GM12878 (cell line): ENCODE measurements at regions of chr11 and their contacts with region 1.

Region 1: GRCh38 chr11:102341844-102342318 is 5.1 kb upstream of the BIRC2 start:
- DNase-seq: peak; percentile 76
- ATAC-seq: peak; percentile 67
- H3K4me3 ChIP-seq: no peak overlapping the region
- H3K27ac ChIP-seq: no peak overlapping the region
- H3K4me1 ChIP-seq: no peaks in the 10 kb centered on the region
- H3K27me3 ChIP-seq: no peaks in the 10 kb centered on the region
- CTCF ChIP-seq: peak; percentile 78 to 84 (median 79)
- EP300 ChIP-seq: no peak
- POLR2A ChIP-seq: no peak
- RAD21 ChIP-seq: peak; percentile 94

Region 2: DNA sequence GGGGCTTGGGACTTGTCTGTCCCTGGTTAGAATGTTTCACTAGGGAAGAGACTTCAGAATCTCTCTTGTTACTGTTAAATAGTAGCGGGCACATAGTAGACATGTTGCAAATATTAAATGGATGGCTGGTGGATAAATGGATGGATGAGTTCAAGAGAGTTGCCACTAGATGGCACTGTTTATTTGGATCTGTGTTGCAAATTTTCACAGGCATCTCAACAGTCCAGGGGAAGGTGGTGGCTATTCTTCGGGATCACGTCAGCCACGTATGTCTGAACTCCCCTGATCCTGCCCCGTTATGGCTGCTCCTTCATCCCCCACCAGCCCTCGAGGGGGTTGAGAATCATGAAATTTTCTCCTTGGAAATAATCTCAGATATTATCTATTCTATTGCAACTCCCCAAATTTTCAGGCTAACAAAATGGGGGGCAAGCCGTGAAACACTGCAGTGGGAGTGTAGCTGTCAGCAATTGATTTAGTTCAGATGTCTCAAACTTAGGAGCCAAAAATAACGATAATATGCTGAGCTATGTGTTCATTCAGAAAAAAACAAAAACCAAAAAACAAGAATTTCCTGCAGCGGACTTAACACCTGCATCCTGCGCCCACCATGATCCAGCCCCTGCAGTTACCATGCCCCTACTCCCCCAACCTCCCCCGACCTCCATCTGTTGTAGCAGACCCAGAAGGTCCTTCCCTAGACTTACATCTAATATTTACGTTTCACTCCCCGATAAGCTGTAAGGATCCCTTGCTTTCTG is 53.7 kb before region 1 on chr11:
- CTCF ChIA-PET with region 1: interaction called, 234 read pairs
- POLR2A ChIA-PET with region 1: interaction called, 3 read pairs
- RAD21 ChIA-PET with region 1: interaction called, 54 read pairs
- SMC1A ChIA-PET with region 1: interaction called, 46 read pairs
- in situ Hi-C with region 1: loop called (anchors 5 kb)
- intact Hi-C with region 1: loop called (anchors 1 kb)
- DNase-seq: peak; percentile 78
- ATAC-seq: peak; percentile 94
- H3K4me3 ChIP-seq: peak overlapping the region; percentile 43; the same call in 1 of the 2 replicates
- H3K27ac ChIP-seq: no peak overlapping the region
- H3K4me1 ChIP-seq: no peaks in the 10 kb centered on the region
- H3K27me3 ChIP-seq: no peaks in the 10 kb centered on the region
- CTCF ChIP-seq: peak; percentile 62 to 83 (median 67)
- EP300 ChIP-seq: no peak
- POLR2A ChIP-seq: no peak
- RAD21 ChIP-seq: peak; percentile 84

Region 3: DNA sequence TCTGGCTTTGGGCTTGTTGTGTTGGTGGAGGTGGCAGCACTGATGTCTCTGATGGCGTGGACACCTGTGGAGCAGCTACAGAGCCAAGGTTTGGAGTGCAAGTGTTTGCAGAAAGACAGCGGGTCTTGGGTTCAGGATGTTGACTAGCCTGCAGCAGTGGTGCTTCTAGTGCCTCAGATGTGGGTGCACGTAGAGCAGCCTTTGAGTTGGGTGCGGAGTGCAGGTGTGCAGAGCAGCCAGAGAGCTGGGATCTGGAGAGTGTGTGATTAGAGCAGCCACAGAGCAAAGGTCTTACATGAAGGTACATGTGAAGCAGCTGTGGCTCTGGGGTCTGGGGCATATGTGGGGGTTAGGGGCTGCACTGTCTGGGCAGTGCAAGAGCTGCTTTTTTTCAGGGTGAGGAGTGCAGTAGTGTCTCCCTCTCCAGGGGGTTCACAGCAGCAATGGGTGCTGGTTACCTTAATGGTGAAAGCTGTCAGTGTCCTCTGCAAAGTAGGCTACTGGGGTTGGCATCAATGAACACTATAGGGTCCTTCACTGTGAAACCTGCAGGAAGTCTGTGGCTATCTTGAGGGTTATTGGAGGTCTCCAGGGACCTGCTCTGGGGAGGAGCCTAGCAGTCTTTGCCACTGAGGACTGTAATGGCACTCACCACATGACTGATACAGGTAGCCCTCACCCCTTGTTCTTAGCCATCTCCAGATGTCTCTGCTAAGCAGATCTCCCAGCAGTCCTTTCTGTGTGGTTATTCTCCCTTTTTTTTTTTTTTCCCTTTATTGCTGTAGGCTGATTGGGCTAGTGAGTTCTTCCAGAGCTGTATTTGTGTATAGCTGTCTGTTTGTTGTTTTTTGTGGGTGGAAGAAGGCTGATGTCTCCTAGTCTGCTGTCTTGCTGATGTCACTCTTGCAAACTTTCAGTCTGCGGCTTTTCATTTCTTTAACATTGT is 19.5 kb after region 1 on chr11:
- CTCF ChIA-PET with region 1: interaction called, 17 read pairs
- POLR2A ChIA-PET with region 1: no interaction called
- RAD21 ChIA-PET with region 1: interaction called, 22 read pairs
- SMC1A ChIA-PET with region 1: interaction called, 14 read pairs
- in situ Hi-C with region 1: no loop called
- intact Hi-C with region 1: no loop called
- DNase-seq: peak; percentile 74
- ATAC-seq: peak; percentile 95
- H3K4me3 ChIP-seq: no peak overlapping the region
- H3K27ac ChIP-seq: no peak overlapping the region
- H3K4me1 ChIP-seq: no peaks in the 10 kb centered on the region
- H3K27me3 ChIP-seq: no peaks in the 10 kb centered on the region
- CTCF ChIP-seq: 0 out of 6 replicates have a peak, but pooled peaks of 1 of the 3 experiments have one; percentile 8
- EP300 ChIP-seq: no peak
- POLR2A ChIP-seq: no peak
- RAD21 ChIP-seq: no peak

Region 4: DNA sequence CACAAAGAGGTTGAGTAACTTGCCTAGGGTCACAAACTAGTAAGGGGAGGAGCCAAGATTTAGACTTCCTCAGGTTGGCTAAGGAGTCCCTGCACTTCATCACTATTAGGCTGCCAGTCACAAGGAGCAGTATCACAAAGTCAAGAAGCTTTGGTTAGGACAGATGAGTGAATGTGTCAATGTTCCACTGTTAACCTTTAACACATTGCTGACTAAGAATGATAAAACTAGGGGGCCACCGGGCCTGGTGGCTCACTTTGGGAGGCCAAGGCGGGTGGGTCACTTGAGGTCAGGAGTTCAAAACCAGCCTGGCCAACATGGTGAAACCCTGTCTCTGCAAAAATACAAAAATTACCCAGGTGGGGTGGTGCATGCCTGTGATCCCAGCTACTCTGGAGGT is 78.7 kb after region 1 on chr11:
- CTCF ChIA-PET with region 1: interaction called, 5 read pairs
- POLR2A ChIA-PET with region 1: no interaction called
- RAD21 ChIA-PET with region 1: interaction called, 6 read pairs
- SMC1A ChIA-PET with region 1: interaction called, 10 read pairs
- in situ Hi-C with region 1: no loop called
- intact Hi-C with region 1: no loop called
- DNase-seq: peak; percentile 40
- ATAC-seq: peak; percentile 83
- H3K4me3 ChIP-seq: no peak overlapping the region
- H3K27ac ChIP-seq: no peak overlapping the region
- H3K4me1 ChIP-seq: peaks cover 4% of the 10 kb centered on the region; the same call in 1 of the 2 replicates
- H3K27me3 ChIP-seq: no peaks in the 10 kb centered on the region
- CTCF ChIP-seq: no peak
- EP300 ChIP-seq: no peak
- POLR2A ChIP-seq: no peak
- RAD21 ChIP-seq: no peak

Region 5: DNA sequence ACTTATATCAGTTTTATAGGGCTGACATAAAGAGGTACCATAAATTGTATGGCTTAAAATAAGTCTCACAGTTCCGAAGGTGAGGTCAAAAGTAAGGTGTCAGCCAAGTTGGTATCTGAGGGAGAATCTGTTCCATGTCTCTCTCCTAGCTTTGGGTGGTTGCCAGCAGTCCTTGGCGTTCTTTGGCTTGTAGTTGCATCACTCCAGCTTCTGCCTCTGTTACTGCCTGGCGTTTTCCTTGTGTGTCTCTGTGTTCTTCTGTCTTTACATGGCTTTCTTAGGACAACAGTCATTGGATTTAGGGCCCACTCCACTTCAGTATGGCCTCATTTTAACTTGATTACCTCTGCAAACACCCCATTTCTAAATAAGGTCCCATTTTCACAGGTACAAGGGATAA is 172.0 kb after region 1 on chr11:
- CTCF ChIA-PET with region 1: interaction called, 18 read pairs
- POLR2A ChIA-PET with region 1: no interaction called
- RAD21 ChIA-PET with region 1: interaction called, 8 read pairs
- SMC1A ChIA-PET with region 1: interaction called, 7 read pairs
- in situ Hi-C with region 1: no loop called
- intact Hi-C with region 1: no loop called
- DNase-seq: no peak
- ATAC-seq: no peak
- H3K4me3 ChIP-seq: no peak overlapping the region
- H3K27ac ChIP-seq: no peak overlapping the region
- H3K4me1 ChIP-seq: no peaks in the 10 kb centered on the region
- H3K27me3 ChIP-seq: no peaks in the 10 kb centered on the region; a peak in 1 of 4 replicates
- CTCF ChIP-seq: no peak
- EP300 ChIP-seq: no peak
- POLR2A ChIP-seq: no peak
- RAD21 ChIP-seq: no peak

Region 6: DNA sequence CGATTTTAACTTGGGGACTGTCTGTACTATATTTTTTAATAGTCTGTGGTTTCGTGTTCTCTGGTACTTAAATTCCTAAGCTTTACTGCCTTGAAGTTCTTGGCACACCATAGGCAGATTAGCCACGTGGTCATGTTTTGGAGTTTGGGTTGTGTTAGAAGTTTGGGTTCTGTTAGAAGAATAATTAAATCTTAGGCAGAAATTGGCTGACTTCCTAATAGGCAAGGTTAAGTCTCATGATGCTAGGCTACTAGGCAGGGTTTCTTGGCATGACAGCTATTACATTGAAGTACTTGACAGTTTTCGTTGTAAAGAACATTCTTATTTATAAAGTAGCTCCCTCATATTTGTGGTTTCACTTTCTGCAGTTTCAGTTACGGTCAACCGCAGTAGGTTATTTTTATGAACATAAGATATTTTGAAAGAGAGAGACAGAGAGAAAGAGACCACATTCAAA is 218.7 kb after region 1 on chr11:
- CTCF ChIA-PET with region 1: interaction called, 10 read pairs
- POLR2A ChIA-PET with region 1: no interaction called
- RAD21 ChIA-PET with region 1: no interaction called
- SMC1A ChIA-PET with region 1: interaction called, 4 read pairs
- in situ Hi-C with region 1: no loop called
- intact Hi-C with region 1: no loop called
- DNase-seq: peak; percentile 84
- ATAC-seq: peak; percentile 85
- H3K4me3 ChIP-seq: no peak overlapping the region; the same call in 1 of the 2 replicates
- H3K27ac ChIP-seq: peak overlapping the region; percentile 86
- H3K4me1 ChIP-seq: peaks cover 56% of the 10 kb centered on the region
- H3K27me3 ChIP-seq: no peaks in the 10 kb centered on the region
- CTCF ChIP-seq: no peak
- EP300 ChIP-seq: peak; percentile 88 to 97
- POLR2A ChIP-seq: no peak
- RAD21 ChIP-seq: peak; percentile 12; the same call in 1 of the 2 replicates